Aorta (tissue), 5 donors: ENCODE measurements at regions of chr7 and their contacts with region 1.

Region 1: DNA sequence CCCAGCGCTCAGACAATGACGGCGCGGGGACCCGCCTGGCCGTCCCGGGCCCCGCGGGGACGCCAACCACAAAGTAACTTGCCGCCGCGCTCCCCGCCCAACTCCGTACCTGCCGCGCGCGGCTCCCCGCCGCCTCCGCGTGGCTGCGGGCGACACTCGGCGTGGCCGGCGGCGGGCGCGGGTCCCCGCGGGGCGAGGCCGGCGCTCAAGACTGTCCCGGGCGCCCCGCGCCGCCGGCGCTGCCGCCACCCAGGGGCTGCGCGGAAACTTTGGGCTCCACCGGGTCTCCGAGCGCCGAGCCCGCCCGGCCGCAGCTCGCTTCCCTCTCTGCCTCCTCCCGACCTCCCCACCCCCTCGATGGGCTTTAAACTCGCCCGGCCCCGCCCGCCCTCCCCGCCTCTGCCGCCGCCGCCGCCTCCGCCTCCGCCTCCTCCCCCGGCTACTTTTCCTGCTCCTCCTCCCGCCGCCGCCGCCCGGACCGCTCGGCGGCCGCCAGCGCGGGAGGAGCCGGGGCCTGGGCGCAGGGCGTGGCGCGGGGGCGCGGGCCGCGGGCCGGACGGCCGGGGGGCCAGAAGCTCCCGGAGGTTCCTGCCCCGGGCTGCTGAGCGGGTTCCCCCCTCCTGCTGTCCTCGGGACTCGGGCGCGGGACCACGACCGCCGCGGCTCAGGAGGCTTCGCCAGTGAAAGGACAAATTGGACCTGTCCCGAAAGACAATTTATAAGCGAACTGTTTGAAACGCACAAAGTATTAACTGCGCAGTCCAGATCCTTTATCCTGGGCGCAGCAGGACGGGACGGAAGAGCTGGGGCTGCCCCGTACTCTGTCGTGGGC is 10.6 kb upstream of the GRB10 start:
- DNase-seq: peak; percentile 77 to 91
- ATAC-seq: peak; percentile 78
- H3K4me3 ChIP-seq: peak overlapping the region; percentile 97 to 98
- H3K27ac ChIP-seq: peak overlapping the region; percentile 61 to 80
- H3K4me1 ChIP-seq: peaks cover 0 to 7% of the 10 kb centered on the region in 2 donors
- H3K27me3 ChIP-seq: no peaks in the 10 kb centered on the region

Region 2: GRCh38 chr7:49776994-49777393 is 1016.3 kb before region 1 on chr7:
- intact Hi-C with region 1: no loop called
- DNase-seq: no peak
- ATAC-seq: no peak
- H3K4me3 ChIP-seq: no peak overlapping the region
- H3K27ac ChIP-seq: no peak overlapping the region
- H3K4me1 ChIP-seq: no peaks in the 10 kb centered on the region
- H3K27me3 ChIP-seq: no peaks in the 10 kb centered on the region

Region 3: DNA sequence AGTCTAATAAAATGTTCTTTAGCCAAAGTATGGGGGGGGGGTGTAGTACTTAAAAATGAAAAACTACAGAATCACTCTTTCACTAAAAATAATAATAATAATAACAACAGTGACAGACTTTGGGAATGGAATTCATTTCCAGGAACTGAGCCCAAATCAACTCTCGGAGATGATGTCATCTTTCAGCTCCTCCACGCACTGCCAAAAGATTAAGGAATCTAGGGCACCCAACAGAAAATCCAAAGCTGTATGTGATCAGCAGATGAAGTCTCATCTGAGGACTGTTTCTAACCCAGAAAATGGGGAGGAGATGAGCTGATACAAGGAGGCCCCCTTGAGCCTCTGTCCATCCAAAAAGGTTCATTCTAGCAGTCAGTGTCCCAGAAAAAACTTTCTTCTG is 65.1 kb before region 1 on chr7:
- intact Hi-C with region 1: loop called (anchors 5 kb)
- DNase-seq: no peak
- ATAC-seq: peak; percentile 61
- H3K4me3 ChIP-seq: no peak overlapping the region
- H3K27ac ChIP-seq: peak overlapping the region in 1 of 2 donors; percentile 81
- H3K4me1 ChIP-seq: peaks cover 9% of the 10 kb centered on the region in 2 donors
- H3K27me3 ChIP-seq: no peaks in the 10 kb centered on the region

Region 4: GRCh38 chr7:50751146-50751545 is 42.2 kb before region 1 on chr7:
- intact Hi-C with region 1: no loop called
- DNase-seq: no peak
- ATAC-seq: no peak
- H3K4me3 ChIP-seq: no peak overlapping the region
- H3K27ac ChIP-seq: no peak overlapping the region
- H3K4me1 ChIP-seq: no peaks in the 10 kb centered on the region
- H3K27me3 ChIP-seq: no peaks in the 10 kb centered on the region